Thyroid gland (tissue), 4 donors: ENCODE measurements at regions of chr9 and their contacts with region 1.

Region 1: GRCh38 chr9:93159601-93160471 is 24.1 kb upstream of the WNK2 start:
- DNase-seq: peak; percentile 93 to 94
- H3K4me3 ChIP-seq: no peak overlapping the region
- H3K27ac ChIP-seq: no peak overlapping the region
- H3K4me1 ChIP-seq: peaks cover 4 to 6% of the 10 kb centered on the region in 2 donors
- H3K27me3 ChIP-seq: no peaks in the 10 kb centered on the region
- CTCF ChIP-seq: peak; percentile 86 to 99 (median 99)
- POLR2A ChIP-seq: no peak

Region 2: DNA sequence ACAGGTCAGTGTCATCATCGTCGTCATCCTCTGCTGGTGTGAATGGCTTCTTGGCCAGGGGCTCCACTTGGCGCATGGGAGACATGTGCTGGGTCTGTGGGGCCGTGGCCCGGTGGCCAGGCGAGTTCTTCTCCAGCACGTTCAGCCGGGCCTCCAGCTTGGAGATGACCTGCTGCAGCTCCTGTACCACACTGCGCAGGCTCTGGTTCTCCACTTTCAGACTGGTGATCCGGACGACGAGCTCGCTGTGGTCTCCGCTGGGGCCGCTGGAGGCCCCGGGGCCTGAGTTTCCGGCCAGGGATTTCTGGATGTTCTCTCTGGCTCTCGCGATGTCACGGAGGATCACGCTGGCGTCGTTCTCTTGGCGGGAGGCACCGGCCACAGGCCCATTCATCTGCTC is 322.6 kb before region 1 on chr9:
- intact Hi-C with region 1: no loop called
- DNase-seq: no peak
- H3K4me3 ChIP-seq: no peak overlapping the region
- H3K27ac ChIP-seq: no peak overlapping the region
- H3K4me1 ChIP-seq: no peaks in the 10 kb centered on the region
- H3K27me3 ChIP-seq: no peaks in the 10 kb centered on the region
- CTCF ChIP-seq: no peak
- POLR2A ChIP-seq: no peak

Region 3: GRCh38 chr9:93095205-93096130 is 64.4 kb before region 1 on chr9:
- intact Hi-C with region 1: no loop called
- DNase-seq: peak; percentile 100
- H3K4me3 ChIP-seq: peak overlapping the region in 1 of 3 donors; percentile 92
- H3K27ac ChIP-seq: peak overlapping the region; percentile 92 to 94 (median 94)
- H3K4me1 ChIP-seq: peaks cover 32 to 59% of the 10 kb centered on the region in 2 donors
- H3K27me3 ChIP-seq: no peaks in the 10 kb centered on the region
- CTCF ChIP-seq: no peak
- POLR2A ChIP-seq: peak; percentile 45 to 82

Region 4: DNA sequence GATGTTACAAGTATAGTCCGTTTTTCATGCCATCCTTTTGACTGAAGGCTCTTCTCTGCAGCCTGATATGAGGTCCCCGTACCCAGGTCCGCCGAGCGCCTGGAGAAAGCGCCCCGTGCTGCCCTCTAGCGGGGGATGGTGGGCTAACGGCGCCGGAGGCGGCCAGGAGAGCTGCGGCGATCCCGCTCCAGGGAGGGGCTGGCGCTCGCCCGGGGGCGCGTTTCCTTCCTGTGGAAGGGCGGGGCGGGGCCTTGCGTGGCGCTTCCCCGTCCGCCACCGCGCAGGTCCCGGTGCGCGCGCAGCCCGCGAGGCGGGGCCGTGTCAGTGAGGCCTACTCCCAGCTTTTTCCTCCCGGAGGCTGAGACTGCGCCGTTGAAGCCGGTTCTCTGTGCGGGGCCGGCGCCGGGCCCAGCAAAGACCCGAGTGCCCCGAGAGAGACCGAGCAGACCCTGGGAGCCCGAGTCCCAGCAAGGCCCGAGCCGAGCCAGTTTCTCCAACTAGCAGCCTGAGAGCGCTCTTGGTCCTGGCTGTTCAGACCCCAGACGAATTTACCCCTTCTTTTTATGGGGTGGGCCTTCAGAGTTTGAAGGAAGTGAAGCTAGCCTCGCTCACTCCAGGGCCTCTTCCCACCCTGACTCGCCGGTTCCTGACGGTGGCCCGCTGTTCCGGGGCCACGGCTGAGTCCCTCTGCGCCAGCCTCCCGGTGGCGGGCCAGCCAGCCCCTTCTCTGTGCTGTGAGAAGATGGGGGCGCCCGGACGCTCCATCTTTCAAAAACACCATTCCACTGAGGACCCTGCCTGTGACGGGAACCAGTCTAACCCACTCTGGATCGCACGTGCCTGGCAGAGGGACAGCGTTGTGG is 406.8 kb after region 1 on chr9:
- intact Hi-C with region 1: loop called (anchors 10 kb)
- DNase-seq: peak; percentile 99
- H3K4me3 ChIP-seq: peak overlapping the region in 2 of 3 donors; percentile 25 to 55
- H3K27ac ChIP-seq: peak overlapping the region; percentile 78 to 92 (median 88)
- H3K4me1 ChIP-seq: peaks cover 9 to 11% of the 10 kb centered on the region in 2 donors
- H3K27me3 ChIP-seq: no peaks in the 10 kb centered on the region
- CTCF ChIP-seq: peak; percentile 73 to 97 (median 92)
- POLR2A ChIP-seq: peak; percentile 62 to 97